ENCODE measurements at regions of chr10 and their contacts with region 1.

Region 1: GRCh38 chr10:71378336-71379117 is 18.2 kb upstream of the CDH23 start:
- DNase-seq: no peak
- ATAC-seq: no peak
- H3K4me3 ChIP-seq: no peak overlapping the region
- H3K27ac ChIP-seq: no peak overlapping the region
- H3K4me1 ChIP-seq: peaks cover 39% of the 10 kb centered on the region
- H3K27me3 ChIP-seq: peaks cover 0 to under 1% of the 10 kb centered on the region in 2 experiments; a peak in 1 of 5 replicates
- CTCF ChIP-seq: peak; percentile 25; the same call in 1 of the 2 replicates
- EP300 ChIP-seq: no peak
- POLR2A ChIP-seq: no peak
- RAD21 ChIP-seq: no peak

Region 2: GRCh38 chr10:71343392-71343773 is 35.1 kb before region 1 on chr10:
- CTCF ChIA-PET with region 1: no interaction called
- POLR2A ChIA-PET with region 1: interaction called, 23 read pairs
- in situ Hi-C with region 1: no loop called
- intact Hi-C with region 1: no loop called
- DNase-seq: peak; percentile 74
- ATAC-seq: peak; percentile 7; the same call in 2 of the 3 replicates
- H3K4me3 ChIP-seq: no peak overlapping the region
- H3K27ac ChIP-seq: peak overlapping the region; percentile 92
- H3K4me1 ChIP-seq: peaks cover 100% of the 10 kb centered on the region
- H3K27me3 ChIP-seq: no peaks in the 10 kb centered on the region
- CTCF ChIP-seq: no peak
- EP300 ChIP-seq: no peak
- POLR2A ChIP-seq: no peak
- RAD21 ChIP-seq: no peak; the same call in 1 of the 2 replicates